Left lung (tissue), 14 donors: ENCODE measurements at regions of chr3 and their contacts with region 1.

Region 1: GRCh38 chr3:108552267-108553159 is 36.7 kb downstream of the CIP2A start:
- DNase-seq: peak in 2 of 4 donors; percentile 43 to 57
- ATAC-seq: peak; percentile 72
- H3K4me3 ChIP-seq: no peak overlapping the region
- H3K27ac ChIP-seq: no peak overlapping the region
- H3K4me1 ChIP-seq: no peaks in the 10 kb centered on the region
- H3K27me3 ChIP-seq: no peaks in the 10 kb centered on the region
- CTCF ChIP-seq: peak in 1 of 2 donors; percentile 37

Region 2: GRCh38 chr3:108301695-108302404 is 250.7 kb before region 1 on chr3:
- intact Hi-C with region 1: no loop called
- DNase-seq: no peak
- ATAC-seq: no peak
- H3K4me3 ChIP-seq: no peak overlapping the region
- H3K27ac ChIP-seq: no peak overlapping the region
- H3K4me1 ChIP-seq: no peaks in the 10 kb centered on the region
- H3K27me3 ChIP-seq: no peaks in the 10 kb centered on the region
- CTCF ChIP-seq: no peak

Region 3: DNA sequence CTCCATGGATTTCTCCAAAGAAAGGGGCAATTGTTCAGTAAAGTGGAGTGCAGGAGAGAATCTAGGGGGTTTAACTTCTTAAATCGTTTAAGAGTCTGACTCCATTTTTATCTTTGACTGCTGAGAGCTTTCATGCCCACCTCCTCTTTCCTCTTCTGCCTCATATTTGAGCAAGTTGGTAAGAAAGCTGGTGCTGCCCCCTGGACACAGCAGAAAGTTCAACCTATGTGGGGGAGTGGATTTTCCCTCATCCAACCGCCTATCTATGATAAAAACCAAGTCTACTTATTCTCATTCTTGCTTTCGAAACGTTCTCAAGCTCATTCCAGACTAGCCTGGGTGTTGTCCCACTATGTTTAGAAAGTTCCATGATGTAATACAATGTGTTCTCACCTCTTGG is 230.2 kb before region 1 on chr3:
- intact Hi-C with region 1: no loop called
- DNase-seq: no peak
- ATAC-seq: no peak
- H3K4me3 ChIP-seq: no peak overlapping the region
- H3K27ac ChIP-seq: no peak overlapping the region
- H3K4me1 ChIP-seq: peaks cover 0 to 3% of the 10 kb centered on the region in 2 donors
- H3K27me3 ChIP-seq: no peaks in the 10 kb centered on the region
- CTCF ChIP-seq: no peak

Region 4: DNA sequence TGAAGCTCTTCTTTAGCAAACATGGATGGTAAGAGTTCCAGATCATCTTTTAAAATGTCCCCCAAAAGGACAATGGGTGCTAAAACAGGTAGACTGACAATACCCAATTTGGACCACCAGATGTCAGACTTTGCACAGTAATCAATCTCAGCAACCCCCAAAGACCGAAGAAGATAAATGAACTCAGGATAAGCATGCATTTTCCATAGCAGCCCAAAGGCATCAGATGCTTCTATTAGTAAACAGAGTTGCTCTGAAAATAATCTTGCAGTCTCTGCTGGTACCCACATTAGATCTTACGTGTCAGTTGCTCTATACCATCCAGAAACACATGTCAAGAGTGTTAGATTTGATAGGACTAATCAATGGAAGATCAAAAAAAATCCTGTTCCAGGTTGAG is 62.7 kb before region 1 on chr3:
- intact Hi-C with region 1: loop called in 1 of 2 experiments (anchors 5 kb)
- DNase-seq: peak in 2 of 4 donors; percentile 37 to 64
- ATAC-seq: peak; percentile 84
- H3K4me3 ChIP-seq: no peak overlapping the region
- H3K27ac ChIP-seq: no peak overlapping the region
- H3K4me1 ChIP-seq: no peaks in the 10 kb centered on the region
- H3K27me3 ChIP-seq: no peaks in the 10 kb centered on the region
- CTCF ChIP-seq: peak; percentile 57 to 79

Region 5: DNA sequence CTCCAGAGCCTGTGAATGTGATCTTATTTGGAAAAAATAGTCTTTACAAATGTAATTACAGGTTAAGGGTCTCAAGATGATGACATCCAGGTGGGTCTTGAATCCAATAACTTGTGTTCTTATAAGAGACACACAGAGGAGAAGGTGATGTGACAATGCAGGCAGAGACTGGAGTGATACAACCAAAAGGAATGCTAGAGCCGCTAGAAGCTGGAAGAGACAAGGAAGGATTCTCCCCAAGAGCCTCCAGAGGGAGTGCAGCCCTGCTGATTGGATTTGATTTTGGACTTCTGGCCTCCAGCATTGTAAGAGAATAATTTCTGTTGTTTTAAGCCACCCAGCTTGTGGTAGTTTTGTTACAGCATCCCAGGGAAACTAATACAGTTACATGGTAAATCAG is 51.8 kb before region 1 on chr3:
- intact Hi-C with region 1: no loop called
- DNase-seq: no peak
- ATAC-seq: no peak
- H3K4me3 ChIP-seq: no peak overlapping the region
- H3K27ac ChIP-seq: no peak overlapping the region
- H3K4me1 ChIP-seq: no peaks in the 10 kb centered on the region
- H3K27me3 ChIP-seq: no peaks in the 10 kb centered on the region
- CTCF ChIP-seq: no peak

Region 6: GRCh38 chr3:108629974-108630373 is 77.5 kb after region 1 on chr3:
- intact Hi-C with region 1: no loop called
- DNase-seq: no peak
- ATAC-seq: no peak
- H3K4me3 ChIP-seq: no peak overlapping the region
- H3K27ac ChIP-seq: no peak overlapping the region
- H3K4me1 ChIP-seq: no peaks in the 10 kb centered on the region
- H3K27me3 ChIP-seq: no peaks in the 10 kb centered on the region
- CTCF ChIP-seq: no peak